ENCODE measurements at regions of chr3 and their contacts with region 1.

Region 1: DNA sequence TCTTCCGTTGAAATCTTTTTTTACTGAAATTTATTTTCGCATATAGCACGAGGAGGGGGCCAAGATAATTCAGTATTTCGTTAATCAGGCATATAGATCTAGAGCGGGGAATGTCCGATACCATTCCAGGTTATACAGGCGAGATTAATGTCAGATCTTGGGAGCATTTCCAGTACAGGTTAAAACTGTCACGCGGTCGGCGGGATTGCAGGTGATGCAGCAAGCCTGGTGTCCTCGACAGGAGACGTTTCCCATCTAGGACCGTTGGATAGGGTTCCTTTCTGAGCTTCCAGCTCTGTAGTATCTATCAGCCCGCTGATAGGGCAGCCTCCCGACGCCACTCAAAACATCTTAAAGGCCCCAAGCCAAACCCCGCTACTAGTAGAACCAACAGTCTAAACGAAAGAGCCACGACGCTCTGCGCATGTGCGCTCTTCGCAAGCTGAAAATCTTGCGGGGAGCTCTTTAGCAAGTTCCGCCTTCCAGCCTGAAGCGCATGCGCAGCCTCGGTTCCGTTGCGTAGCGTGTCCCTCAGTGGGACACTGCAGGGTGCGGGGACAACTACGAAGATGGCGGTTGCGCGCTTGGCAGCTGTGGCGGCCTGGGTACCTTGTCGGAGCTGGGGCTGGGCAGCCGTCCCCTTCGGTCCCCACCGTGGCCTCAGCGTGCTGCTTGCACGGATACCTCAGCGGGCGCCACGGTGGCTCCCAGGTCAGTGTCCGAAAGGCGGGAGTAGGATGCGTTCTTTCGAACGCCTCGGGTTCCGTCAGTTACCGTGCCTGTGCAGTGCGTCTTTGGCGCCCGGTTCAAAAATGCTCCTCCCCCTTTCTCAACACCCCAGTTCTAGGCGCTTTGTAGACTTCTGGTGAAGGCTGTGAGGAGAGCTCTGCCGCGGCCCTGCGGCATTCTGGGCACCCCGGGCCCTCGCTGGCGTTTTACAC is at the start of gene ABHD10:
- DNase-seq: peak; percentile 98
- H3K4me3 Mint-ChIP-seq: peak within 1 kb of the TSS; percentile 90
- H3K27ac Mint-ChIP-seq: peak within 1 kb of the TSS; percentile 91
- H3K4me1 Mint-ChIP-seq: peaks cover 37% of the 10 kb centered on the region
- H3K27me3 Mint-ChIP-seq: no peaks in the 10 kb centered on the region
- total RNA-seq, gene ABHD10: 79.8 to 84.2 TPM

Region 2: DNA sequence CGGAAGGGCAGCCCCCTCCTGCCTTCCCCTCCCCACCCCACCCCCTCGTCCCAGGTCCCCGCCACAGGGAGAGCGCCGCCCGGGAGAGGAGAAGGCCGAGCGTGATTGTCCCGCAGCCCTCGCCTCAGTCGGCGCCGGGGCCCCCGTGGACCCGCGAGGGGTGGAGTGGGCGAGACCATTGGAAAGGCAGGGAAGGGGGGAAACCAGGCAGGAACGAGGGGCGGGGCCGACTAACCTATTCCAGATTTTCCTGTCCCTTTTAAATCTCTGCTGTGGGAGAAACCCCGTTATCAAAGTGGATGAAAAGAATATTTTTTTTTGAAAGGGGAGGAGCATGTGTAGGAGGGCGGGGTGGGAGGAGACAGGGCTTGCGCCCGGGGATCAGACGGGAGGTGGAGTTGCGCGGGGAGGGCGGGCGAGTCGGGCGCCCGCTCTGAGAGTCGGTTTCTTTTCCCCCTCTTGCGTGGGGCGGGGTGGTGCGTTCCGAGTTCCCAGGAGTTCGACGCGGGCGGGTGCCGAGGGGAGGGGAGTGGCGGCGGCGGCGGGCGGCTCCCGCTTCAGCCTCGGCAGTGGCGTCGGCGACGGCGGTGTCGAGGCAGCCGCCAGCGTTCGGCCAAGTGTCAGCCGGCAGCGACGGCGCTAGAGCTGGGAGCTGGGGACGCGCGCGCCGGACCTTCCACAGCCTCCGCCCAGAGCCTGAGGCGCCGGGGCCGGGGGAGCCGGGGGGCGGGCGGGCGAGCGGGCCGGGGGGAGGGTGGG is 907.3 kb before region 1 on chr3 and contains the start of gene NECTIN3:
- CTCF ChIA-PET with region 1: no interaction called
- POLR2A ChIA-PET with region 1: no interaction called
- intact Hi-C with region 1: loop called (anchors 10 kb)
- DNase-seq: peak; percentile 92
- H3K4me3 Mint-ChIP-seq: peak within 1 kb of the TSS; percentile 91
- H3K27ac Mint-ChIP-seq: peak within 1 kb of the TSS; percentile 75
- H3K4me1 Mint-ChIP-seq: peaks cover 41% of the 10 kb centered on the region
- H3K27me3 Mint-ChIP-seq: peaks cover 20% of the 10 kb centered on the region
- total RNA-seq, gene NECTIN3: 10.5 to 11.3 TPM

Region 3: GRCh38 chr3:111616417-111617105 is 362.2 kb before region 1 on chr3:
- CTCF ChIA-PET with region 1: interaction called, 4 read pairs
- POLR2A ChIA-PET with region 1: interaction called, 3 read pairs
- intact Hi-C with region 1: loop called (anchors 5 kb)
- DNase-seq: peak; percentile 89
- H3K4me3 Mint-ChIP-seq: peak overlapping the region; percentile 49
- H3K27ac Mint-ChIP-seq: peak overlapping the region; percentile 92
- H3K4me1 Mint-ChIP-seq: peaks cover 77% of the 10 kb centered on the region
- H3K27me3 Mint-ChIP-seq: no peaks in the 10 kb centered on the region

Region 4: DNA sequence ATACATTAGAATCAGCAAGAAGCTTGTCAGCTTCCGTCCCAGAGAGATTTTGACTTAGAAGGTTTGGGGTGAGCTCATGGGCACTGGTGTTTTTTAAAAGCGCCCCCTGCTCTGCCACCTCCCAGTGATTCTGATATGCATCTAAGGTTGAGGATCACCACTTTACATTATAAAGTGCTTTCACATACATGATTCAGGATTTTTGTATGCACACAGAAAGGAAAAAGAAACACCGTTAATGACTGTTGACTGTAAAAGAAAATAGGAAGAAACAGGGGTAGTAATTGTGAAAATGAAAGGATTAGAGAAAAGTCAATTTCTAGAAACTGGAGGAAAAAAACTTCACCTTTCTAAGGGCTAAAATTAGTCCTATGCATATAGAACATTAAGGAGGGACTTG is 278.7 kb before region 1 on chr3:
- CTCF ChIA-PET with region 1: no interaction called
- POLR2A ChIA-PET with region 1: interaction called, 5 read pairs
- intact Hi-C with region 1: loop called (anchors 1 kb)
- DNase-seq: peak; percentile 37
- H3K4me3 Mint-ChIP-seq: no peak overlapping the region
- H3K27ac Mint-ChIP-seq: peak overlapping the region; percentile 47
- H3K4me1 Mint-ChIP-seq: peaks cover 43% of the 10 kb centered on the region
- H3K27me3 Mint-ChIP-seq: no peaks in the 10 kb centered on the region

Region 5: GRCh38 chr3:111967651-111968274 is 11.0 kb before region 1 on chr3:
- CTCF ChIA-PET with region 1: interaction called, 28 read pairs
- POLR2A ChIA-PET with region 1: interaction called, 5 read pairs
- intact Hi-C with region 1: no loop called
- DNase-seq: peak; percentile 87
- H3K4me3 Mint-ChIP-seq: no peak overlapping the region
- H3K27ac Mint-ChIP-seq: no peak overlapping the region
- H3K4me1 Mint-ChIP-seq: peaks cover 21% of the 10 kb centered on the region
- H3K27me3 Mint-ChIP-seq: no peaks in the 10 kb centered on the region

Region 6: GRCh38 chr3:111998636-111999483 is 20.1 kb after region 1 on chr3 and contains the start of gene TAGLN3:
- CTCF ChIA-PET with region 1: interaction called, 5 read pairs
- POLR2A ChIA-PET with region 1: interaction called, 13 read pairs
- intact Hi-C with region 1: loop called (anchors 1 kb)
- DNase-seq: no peak
- H3K4me3 Mint-ChIP-seq: peak within 1 kb of the TSS; percentile 34
- H3K27ac Mint-ChIP-seq: no peak within 1 kb of the TSS
- H3K4me1 Mint-ChIP-seq: peaks cover 39% of the 10 kb centered on the region
- H3K27me3 Mint-ChIP-seq: no peaks in the 10 kb centered on the region
- total RNA-seq, gene TAGLN3: 0.78 to 0.85 TPM

Region 7: GRCh38 chr3:112013058-112013783 is 34.5 kb after region 1 on chr3:
- CTCF ChIA-PET with region 1: interaction called, 55 read pairs
- POLR2A ChIA-PET with region 1: interaction called, 11 read pairs
- intact Hi-C with region 1: loop called (anchors 1 kb)
- DNase-seq: peak; percentile 82
- H3K4me3 Mint-ChIP-seq: no peak overlapping the region
- H3K27ac Mint-ChIP-seq: peak overlapping the region; percentile 40
- H3K4me1 Mint-ChIP-seq: peaks cover 19% of the 10 kb centered on the region
- H3K27me3 Mint-ChIP-seq: no peaks in the 10 kb centered on the region

Region 8: DNA sequence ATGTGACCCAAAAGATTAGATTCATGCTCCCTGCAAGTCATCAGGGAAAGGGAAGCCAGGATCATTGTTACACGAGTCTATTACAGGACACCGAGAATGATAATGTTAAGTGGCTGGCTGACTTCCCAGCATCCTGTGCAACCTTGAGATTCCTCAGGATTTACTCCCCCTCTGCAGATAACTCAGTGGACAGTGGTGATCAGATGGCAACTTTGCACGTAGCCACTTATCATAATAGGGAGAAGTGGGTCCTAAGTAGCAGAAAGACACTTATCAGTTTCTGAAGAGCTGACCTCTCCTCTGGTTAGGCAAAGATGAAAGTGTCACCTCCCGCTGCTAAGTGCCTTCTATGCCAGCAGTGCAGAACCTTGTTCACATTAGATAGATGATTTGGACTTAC is 49.1 kb after region 1 on chr3:
- CTCF ChIA-PET with region 1: no interaction called
- POLR2A ChIA-PET with region 1: no interaction called
- intact Hi-C with region 1: no loop called
- DNase-seq: no peak
- H3K4me3 Mint-ChIP-seq: no peak overlapping the region
- H3K27ac Mint-ChIP-seq: no peak overlapping the region
- H3K4me1 Mint-ChIP-seq: no peaks in the 10 kb centered on the region
- H3K27me3 Mint-ChIP-seq: no peaks in the 10 kb centered on the region

Measured in activated CD4-positive, alpha-beta memory T cell treated with anti-CD3 and anti-CD28 coated beads for 36 hours (primary cell).